ENCODE measurements at regions of chr17 and their contacts with region 1.

Region 1: GRCh38 chr17:75784473-75785015 is at the start of gene UNK:
- DNase-seq: peak; percentile 97 to 99
- ATAC-seq: peak; percentile 88 to 91 (median 90)
- H3K4me3 ChIP-seq: peak within 1 kb of the TSS; percentile 75
- H3K27ac ChIP-seq: peak within 1 kb of the TSS; percentile 96
- H3K4me1 ChIP-seq: peaks cover 28% of the 10 kb centered on the region
- H3K27me3 ChIP-seq: no peaks in the 10 kb centered on the region
- CTCF ChIP-seq: no peak
- total RNA-seq, gene UNK: 7.9 to 11.6 (median 8.2) TPM

Region 2: DNA sequence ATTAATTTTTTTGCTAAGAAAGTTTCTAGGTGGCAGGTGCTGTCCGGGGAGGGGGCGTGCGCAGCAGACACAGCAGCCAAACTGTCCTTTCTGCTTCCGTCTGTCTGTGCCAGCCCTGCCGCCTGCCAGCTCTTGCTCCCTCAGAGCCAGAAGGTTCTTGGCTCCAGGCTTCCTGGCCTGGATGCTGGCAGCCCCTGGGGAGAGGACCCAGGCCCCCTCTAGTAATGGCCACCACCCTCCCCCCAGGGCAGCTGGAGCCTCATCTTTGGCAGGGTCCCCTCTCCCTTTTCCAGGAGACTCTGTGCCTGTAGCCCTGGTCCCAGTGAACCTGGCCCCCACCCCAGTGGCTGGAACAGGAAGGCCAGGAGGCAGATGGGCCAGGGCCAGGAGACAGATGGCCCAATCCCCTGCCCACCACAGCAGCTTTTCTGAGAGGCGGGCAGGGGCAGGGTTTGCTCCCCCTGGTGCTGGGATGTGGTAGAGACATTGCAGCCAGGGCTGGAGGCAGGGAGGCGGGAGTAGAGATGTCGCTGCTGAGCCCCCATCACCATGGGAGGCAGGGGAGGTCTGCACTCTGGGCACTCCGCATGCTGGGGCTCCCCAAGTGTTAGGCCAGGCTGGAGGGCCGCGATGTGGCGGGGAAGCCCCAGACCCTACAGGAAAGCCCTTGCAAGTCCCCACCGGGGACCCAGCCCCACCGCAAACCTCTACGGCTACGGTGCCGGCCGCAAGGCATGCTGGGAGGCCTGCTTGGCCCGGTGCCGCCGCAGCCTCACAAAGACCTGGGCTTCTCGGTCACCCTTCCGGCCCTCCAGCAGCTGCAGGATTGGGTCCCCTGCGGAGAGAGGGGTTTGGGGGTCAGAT is 42.9 kb after region 1 on chr17:
- intact Hi-C with region 1: loop called (anchors 5 kb)
- DNase-seq: peak; percentile 80 to 89
- ATAC-seq: peak; percentile 73 to 85 (median 79)
- H3K4me3 ChIP-seq: peak overlapping the region; percentile 49
- H3K27ac ChIP-seq: peak overlapping the region; percentile 67
- H3K4me1 ChIP-seq: peaks cover 9% of the 10 kb centered on the region
- H3K27me3 ChIP-seq: no peaks in the 10 kb centered on the region
- CTCF ChIP-seq: peak; percentile 64

Region 3: GRCh38 chr17:75845049-75845860 is 60.7 kb after region 1 on chr17:
- intact Hi-C with region 1: loop called (anchors 5 kb)
- DNase-seq: peak; percentile 91 to 97
- ATAC-seq: peak; percentile 88 to 91 (median 89)
- H3K4me3 ChIP-seq: peak overlapping the region; percentile 19
- H3K27ac ChIP-seq: peak overlapping the region; percentile 95
- H3K4me1 ChIP-seq: peaks cover 42% of the 10 kb centered on the region
- H3K27me3 ChIP-seq: no peaks in the 10 kb centered on the region
- CTCF ChIP-seq: peak; percentile 90

Region 4: DNA sequence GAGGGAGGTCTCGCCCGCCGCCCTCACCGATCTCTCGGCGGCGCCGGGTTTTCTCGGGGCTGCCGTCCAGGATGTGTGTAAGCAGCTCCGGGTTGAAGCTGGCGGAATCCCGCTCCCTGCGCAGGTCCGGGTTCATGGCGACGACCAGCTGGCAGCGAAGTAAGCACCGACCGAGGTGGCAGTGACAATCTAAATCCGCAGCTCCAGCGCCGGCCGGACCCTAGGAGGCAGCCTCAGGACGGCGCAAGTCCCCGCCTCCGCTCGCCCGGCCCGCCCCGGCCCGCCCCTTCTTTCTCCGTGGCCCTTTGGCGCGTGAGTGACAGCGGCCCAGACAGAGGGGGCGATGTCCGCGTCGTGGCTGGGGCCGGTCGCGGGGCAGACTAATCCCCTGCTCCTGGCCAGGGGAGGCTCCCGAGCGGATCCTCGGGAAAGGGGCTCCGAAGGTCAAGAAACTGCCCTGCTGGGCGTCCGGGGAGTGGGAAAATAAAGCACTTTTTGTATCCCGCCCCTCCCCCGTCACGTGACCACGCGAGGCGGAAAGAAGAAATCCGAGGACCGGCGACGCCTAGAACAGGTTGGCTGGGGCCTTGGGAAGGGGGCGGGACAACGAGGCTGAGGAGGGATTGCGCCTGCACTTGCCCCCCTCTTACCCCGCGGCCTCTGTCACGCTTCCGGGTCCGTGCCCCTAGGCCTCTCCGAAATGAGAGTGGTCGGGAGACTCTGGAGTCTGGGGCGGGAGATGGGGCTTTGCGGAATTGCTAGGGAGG is 194.6 kb after region 1 on chr17 and contains the starts of genes ACOX1 and TEN1:
- intact Hi-C with region 1: no loop called
- DNase-seq: peak; percentile 98 to 99
- ATAC-seq: peak; percentile 95 to 98 (median 96)
- H3K4me3 ChIP-seq: peak within 1 kb of the TSS; percentile 85
- H3K27ac ChIP-seq: peak within 1 kb of the TSS; percentile 94
- H3K4me1 ChIP-seq: peaks cover 31% of the 10 kb centered on the region
- H3K27me3 ChIP-seq: no peaks in the 10 kb centered on the region
- CTCF ChIP-seq: no peak
- total RNA-seq, gene ACOX1: 58.1 to 78.8 (median 64.4) TPM
- total RNA-seq, gene TEN1: 3.4 to 8.8 (median 7.0) TPM

Measured in psoas muscle (tissue), 8 donors.